K562 (cell line): ENCODE measurements at regions of chr4 and their contacts with region 1.

Region 1: DNA sequence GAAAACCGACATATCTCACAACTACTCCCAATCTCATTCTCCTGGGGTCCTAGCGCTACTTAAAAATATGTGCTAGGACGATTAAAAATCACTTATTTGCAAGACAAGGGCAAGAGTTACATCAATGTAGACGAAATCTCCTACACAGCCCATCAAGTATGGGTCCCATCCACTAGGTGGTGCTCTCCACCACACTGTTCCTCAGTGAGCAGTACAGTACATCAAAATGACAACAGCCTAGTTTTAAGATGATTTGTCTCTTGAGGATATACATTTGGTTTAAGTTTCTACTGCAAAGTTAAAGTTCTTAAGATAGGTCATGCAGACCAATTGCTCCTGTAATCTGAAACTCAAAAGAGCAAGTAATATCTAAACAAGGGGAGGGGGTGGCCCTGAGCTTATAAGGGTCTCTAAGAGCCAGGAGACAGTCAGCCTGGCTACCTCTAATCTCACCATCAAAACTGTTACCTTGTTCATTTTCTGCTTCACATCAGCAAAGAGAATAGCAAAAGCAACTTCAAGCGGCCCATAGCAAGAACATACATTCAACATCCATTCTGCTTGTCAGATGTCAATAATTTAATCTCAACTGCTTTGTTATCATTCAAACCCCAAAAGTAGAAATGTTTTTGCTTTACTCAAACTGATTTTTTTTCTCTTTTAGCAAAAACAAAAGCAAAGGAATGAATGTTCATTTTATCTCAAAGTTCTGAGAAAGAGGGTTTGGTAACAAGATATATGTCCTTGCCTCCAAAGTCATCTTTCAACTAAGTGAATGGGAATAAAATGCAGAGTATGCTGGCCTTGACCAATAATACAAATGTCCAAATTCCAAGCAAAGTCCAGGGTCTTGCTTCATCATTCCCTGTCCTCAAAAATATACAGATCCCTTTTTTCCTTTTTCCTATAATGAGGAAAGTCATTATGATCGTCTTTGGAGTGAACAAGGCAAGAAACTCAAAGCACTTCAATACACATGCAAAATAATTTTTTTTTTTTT is 53.1 kb downstream of the STX18 start:
- DNase-seq: peak; percentile 69 to 82 (median 72)
- ATAC-seq: peak; percentile 100
- H3K4me3 ChIP-seq: no peak overlapping the region
- H3K27ac ChIP-seq: no peak overlapping the region
- H3K4me1 ChIP-seq: no peaks in the 10 kb centered on the region
- H3K27me3 ChIP-seq: no peaks in the 10 kb centered on the region
- CTCF ChIP-seq: peak; percentile 79 to 90 (median 89)
- EP300 ChIP-seq: no peak
- POLR2A ChIP-seq: no peak
- RAD21 ChIP-seq: peak; percentile 81 to 87

Region 2: DNA sequence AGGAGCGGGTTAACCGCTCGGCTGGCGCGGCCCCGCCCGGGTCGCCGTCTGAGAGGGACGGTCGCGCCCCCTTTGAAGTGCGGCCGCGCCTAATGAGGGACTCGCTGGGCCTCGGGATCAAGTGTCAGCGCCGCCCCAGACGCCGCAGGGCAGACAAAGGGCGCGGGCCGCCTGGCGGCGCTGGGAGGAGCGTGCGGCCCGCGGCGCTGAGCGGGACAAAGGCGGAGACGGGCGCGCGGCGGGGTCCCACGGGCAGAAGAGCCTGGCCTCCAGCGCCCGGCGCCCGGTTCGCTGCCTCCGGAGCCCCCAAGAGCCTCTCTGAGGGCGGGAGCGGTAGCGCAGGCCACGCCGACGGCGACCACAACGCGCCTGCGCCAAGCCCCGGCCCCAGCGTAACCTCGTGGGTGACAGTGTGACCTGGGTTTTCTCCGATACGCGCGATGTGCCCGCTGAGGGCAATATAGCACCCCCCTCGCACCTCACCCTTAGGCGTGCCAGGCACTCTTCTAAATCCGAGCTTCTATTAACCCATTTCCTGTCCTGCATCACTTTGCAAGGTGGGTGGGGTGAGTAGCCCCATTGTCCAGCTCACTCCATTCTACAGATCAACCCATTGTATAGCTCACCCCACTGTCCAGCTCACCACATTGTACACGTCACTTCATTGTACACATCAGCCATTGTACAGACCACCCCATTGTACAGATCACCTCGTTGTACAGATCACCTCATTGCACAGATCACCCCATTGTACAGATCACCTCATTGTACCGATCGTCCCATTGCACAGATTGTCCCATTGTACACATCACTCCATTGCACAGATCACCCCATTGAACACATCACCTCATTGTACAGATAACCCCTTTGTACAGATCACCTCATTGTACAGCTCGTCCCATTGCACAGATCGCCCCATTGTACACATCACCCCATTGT is 86.8 kb after region 1 on chr4:
- CTCF ChIA-PET with region 1: interaction called, 5 read pairs
- POLR2A ChIA-PET with region 1: no interaction called
- in situ Hi-C with region 1: no loop called
- intact Hi-C with region 1: loop called (anchors 5 kb)
- DNase-seq: peak; percentile 77 to 82 (median 80)
- ATAC-seq: peak; percentile 100
- H3K4me3 ChIP-seq: peak overlapping the region; percentile 48
- H3K27ac ChIP-seq: no peak overlapping the region
- H3K4me1 ChIP-seq: peaks cover 2 to 11% of the 10 kb centered on the region in 2 experiments; a peak in 2 of 5 replicates
- H3K27me3 ChIP-seq: no peaks in the 10 kb centered on the region; a peak in 1 of 5 replicates
- CTCF ChIP-seq: peak; percentile 36 to 78 (median 47); a peak in 4 of 6 replicates
- EP300 ChIP-seq: no peak
- POLR2A ChIP-seq: no peak
- RAD21 ChIP-seq: peak; percentile 41 to 48; a peak in 2 of 4 replicates

Region 3: GRCh38 chr4:4677556-4678522 is 189.1 kb after region 1 on chr4:
- CTCF ChIA-PET with region 1: no interaction called
- POLR2A ChIA-PET with region 1: no interaction called
- in situ Hi-C with region 1: no loop called
- intact Hi-C with region 1: loop called (anchors 1 kb)
- DNase-seq: peak; percentile 27 to 40 (median 34)
- ATAC-seq: peak; percentile 82
- H3K4me3 ChIP-seq: no peak overlapping the region
- H3K27ac ChIP-seq: no peak overlapping the region
- H3K4me1 ChIP-seq: peaks cover 0 to 5% of the 10 kb centered on the region in 2 experiments; a peak in 2 of 5 replicates
- H3K27me3 ChIP-seq: peaks cover 3 to 8% of the 10 kb centered on the region in 2 experiments; a peak in 3 of 5 replicates
- CTCF ChIP-seq: peak; percentile 50 to 65 (median 64)
- EP300 ChIP-seq: no peak
- POLR2A ChIP-seq: no peak
- RAD21 ChIP-seq: peak; percentile 31 to 57; a peak in 3 of 4 replicates

Region 4: DNA sequence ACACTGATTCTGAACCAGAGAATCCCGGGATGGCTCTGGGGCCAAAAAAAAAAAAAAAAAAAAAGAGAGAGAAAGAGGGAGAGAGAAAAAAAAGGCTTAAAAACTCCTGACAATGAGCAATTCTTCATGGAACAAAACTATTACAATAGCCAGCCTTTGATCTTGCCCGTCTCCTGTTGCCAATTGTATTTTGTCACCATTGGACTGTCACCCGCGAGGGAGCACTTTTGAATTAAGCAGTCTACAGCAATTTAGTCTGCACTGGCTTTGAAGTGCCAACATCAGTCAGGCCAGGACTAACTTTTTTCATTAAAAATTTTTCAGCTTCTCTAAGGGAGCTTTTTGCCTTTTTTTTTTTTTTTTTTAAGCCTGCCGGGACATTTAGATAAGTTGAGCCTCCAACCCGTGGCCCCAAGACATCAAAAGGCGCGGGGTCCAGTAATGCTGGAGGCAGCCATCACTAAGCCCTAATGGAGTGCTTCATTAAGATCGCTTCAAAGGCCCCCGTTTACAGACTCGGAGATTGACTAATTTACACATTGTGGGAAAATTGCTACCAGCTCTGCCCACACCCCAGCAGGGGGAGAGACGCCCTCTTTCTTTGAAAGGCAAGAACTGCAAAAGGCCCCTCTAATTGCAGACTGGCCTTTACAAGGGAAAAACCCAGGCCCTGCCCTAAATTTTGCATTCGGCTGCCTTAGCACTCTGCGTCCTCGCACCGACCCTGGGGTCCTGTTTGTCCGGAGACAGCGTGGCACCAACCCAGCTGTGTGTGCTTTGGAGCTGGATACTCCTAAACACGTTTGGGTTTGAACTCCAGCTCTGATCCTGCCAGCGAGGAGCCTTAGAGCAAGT is 272.6 kb after region 1 on chr4:
- CTCF ChIA-PET with region 1: interaction called, 3 read pairs
- POLR2A ChIA-PET with region 1: interaction called, 3 read pairs
- in situ Hi-C with region 1: no loop called
- intact Hi-C with region 1: loop called (anchors 1 kb)
- DNase-seq: peak; percentile 15 to 47 (median 30)
- ATAC-seq: peak; percentile 84
- H3K4me3 ChIP-seq: no peak overlapping the region
- H3K27ac ChIP-seq: no peak overlapping the region
- H3K4me1 ChIP-seq: no peaks in the 10 kb centered on the region
- H3K27me3 ChIP-seq: peaks cover 51 to 88% of the 10 kb centered on the region in 2 experiments
- CTCF ChIP-seq: peak; percentile 58 to 71 (median 66)
- EP300 ChIP-seq: no peak
- POLR2A ChIP-seq: no peak
- RAD21 ChIP-seq: peak in 1 of 2 experiments; percentile 53; a peak in 3 of 4 replicates

Region 5: GRCh38 chr4:4880492-4880891 is 391.8 kb after region 1 on chr4:
- CTCF ChIA-PET with region 1: interaction called, 17 read pairs
- POLR2A ChIA-PET with region 1: no interaction called
- in situ Hi-C with region 1: loop called (anchors 10 kb)
- intact Hi-C with region 1: loop called (anchors 2 kb)
- DNase-seq: peak in 1 of 4 experiments; percentile 33
- ATAC-seq: peak; percentile 52; the same call in 1 of the 3 replicates
- H3K4me3 ChIP-seq: no peak overlapping the region
- H3K27ac ChIP-seq: no peak overlapping the region
- H3K4me1 ChIP-seq: no peaks in the 10 kb centered on the region
- H3K27me3 ChIP-seq: peaks cover 6 to 27% of the 10 kb centered on the region in 2 experiments; a peak in 4 of 5 replicates
- CTCF ChIP-seq: peak; percentile 25 to 66 (median 36); a peak in 3 of 6 replicates
- EP300 ChIP-seq: no peak
- POLR2A ChIP-seq: no peak
- RAD21 ChIP-seq: peak; percentile 45 to 62

Region 6: GRCh38 chr4:5812506-5813229 is 1324.0 kb after region 1 on chr4:
- CTCF ChIA-PET with region 1: no interaction called
- POLR2A ChIA-PET with region 1: no interaction called
- in situ Hi-C with region 1: loop called (anchors 25 kb)
- intact Hi-C with region 1: no loop called
- DNase-seq: peak; percentile 71 to 78 (median 76)
- ATAC-seq: peak; percentile 98
- H3K4me3 ChIP-seq: no peak overlapping the region
- H3K27ac ChIP-seq: no peak overlapping the region
- H3K4me1 ChIP-seq: no peaks in the 10 kb centered on the region; a peak in 1 of 5 replicates
- H3K27me3 ChIP-seq: no peaks in the 10 kb centered on the region; a peak in 1 of 5 replicates
- CTCF ChIP-seq: peak; percentile 66 to 89 (median 84)
- EP300 ChIP-seq: no peak
- POLR2A ChIP-seq: no peak
- RAD21 ChIP-seq: peak; percentile 63 to 71; a peak in 3 of 4 replicates